AG04449 (cell line): ENCODE measurements at regions of chr3 and their contacts with region 1.

Region 1: DNA sequence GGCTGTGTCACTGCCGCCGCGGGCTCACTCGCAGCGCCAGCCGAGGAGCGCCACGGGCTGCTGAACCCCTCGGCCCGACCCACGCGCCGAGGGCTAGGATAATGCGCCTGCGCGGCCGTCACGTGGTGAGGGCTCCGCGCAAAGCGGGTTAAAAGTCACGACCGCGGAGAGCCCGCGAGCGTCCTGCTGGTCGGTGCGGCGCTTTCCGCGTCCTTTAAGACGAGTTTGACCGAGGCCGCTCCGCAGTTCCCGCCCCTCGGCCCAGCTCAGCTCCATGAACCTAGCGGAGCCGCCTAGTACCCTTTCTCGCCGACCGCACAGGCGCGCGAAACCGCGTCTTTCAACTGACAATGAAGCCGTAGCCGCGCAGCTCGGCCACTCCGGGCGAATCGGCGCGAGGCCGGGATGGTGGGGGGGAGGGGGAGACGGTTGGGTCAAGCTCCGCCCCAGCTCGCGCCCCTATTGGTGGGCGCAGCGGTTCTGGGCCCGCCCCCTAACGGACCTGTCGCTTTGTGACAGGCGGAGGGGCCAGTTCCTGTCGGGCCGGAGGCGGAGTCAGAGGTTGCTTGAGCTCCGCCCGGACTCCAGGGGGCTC is 636 bp upstream of the STT3B start:
- DNase-seq: peak; percentile 92
- H3K4me3 ChIP-seq: peak overlapping the region; percentile 83
- CTCF ChIP-seq: no peak

Region 2: GRCh38 chr3:31544634-31545033 is 12.5 kb after region 1 on chr3:
- CTCF ChIA-PET with region 1: interaction called, 14 read pairs
- POLR2A ChIA-PET with region 1: interaction called, 5 read pairs
- DNase-seq: no peak
- H3K4me3 ChIP-seq: no peak overlapping the region
- CTCF ChIP-seq: no peak